MCF 10A (cell line): ENCODE measurements at regions of chr4 and their contacts with region 1.

Region 1: GRCh38 chr4:140052050-140052449 is 101.9 kb downstream of the MAML3 start:
- DNase-seq: peak; percentile 47
- H3K4me3 Mint-ChIP-seq: no peak overlapping the region
- H3K27ac Mint-ChIP-seq: no peak overlapping the region
- H3K4me1 Mint-ChIP-seq: peaks cover 13% of the 10 kb centered on the region
- H3K27me3 Mint-ChIP-seq: no peaks in the 10 kb centered on the region
- CTCF ChIP-seq: peak; percentile 57

Region 2: DNA sequence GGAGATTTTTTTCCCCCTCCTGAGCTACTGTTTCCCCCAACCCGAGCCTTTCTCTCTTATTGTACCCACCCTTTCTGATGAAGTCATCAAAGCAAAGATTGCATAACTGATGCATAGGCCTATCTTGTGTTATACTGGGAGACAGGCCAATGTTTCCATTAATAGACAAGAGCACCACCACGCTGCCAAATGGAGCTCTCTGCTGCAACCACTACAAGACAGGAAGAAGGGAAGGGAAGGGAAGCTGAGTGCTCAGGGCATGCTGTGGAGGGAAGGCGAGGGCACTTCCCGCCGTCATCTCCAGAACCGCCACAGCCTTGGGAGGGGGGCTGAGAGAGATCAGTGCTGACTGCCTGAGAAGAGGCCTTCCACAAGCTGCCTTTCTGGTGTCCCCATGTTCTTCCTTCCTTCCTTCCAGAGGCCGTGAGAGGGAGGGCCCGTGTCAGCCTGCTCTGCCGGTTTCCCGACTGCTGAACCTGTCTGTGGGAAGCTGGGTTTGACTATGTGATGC is 311.5 kb before region 1 on chr4:
- CTCF ChIA-PET with region 1: interaction called, 6 read pairs
- POLR2A ChIA-PET with region 1: interaction called, 4 read pairs
- intact Hi-C with region 1: loop called (anchors 5 kb)
- DNase-seq: peak; percentile 93
- H3K4me3 Mint-ChIP-seq: no peak overlapping the region
- H3K27ac Mint-ChIP-seq: no peak overlapping the region
- H3K4me1 Mint-ChIP-seq: peaks cover 7% of the 10 kb centered on the region
- H3K27me3 Mint-ChIP-seq: no peaks in the 10 kb centered on the region
- CTCF ChIP-seq: peak; percentile 21

Region 3: GRCh38 chr4:140302151-140302859 is 250.3 kb after region 1 on chr4:
- CTCF ChIA-PET with region 1: no interaction called
- POLR2A ChIA-PET with region 1: no interaction called
- intact Hi-C with region 1: no loop called
- DNase-seq: no peak
- H3K4me3 Mint-ChIP-seq: no peak overlapping the region
- H3K27ac Mint-ChIP-seq: no peak overlapping the region
- H3K4me1 Mint-ChIP-seq: peaks cover 29% of the 10 kb centered on the region
- H3K27me3 Mint-ChIP-seq: no peaks in the 10 kb centered on the region
- CTCF ChIP-seq: no peak

Region 4: GRCh38 chr4:140523857-140524742 is 472.1 kb after region 1 on chr4 and contains the start of gene ELMOD2:
- CTCF ChIA-PET with region 1: no interaction called
- POLR2A ChIA-PET with region 1: no interaction called
- intact Hi-C with region 1: no loop called
- DNase-seq: peak; percentile 97
- H3K4me3 Mint-ChIP-seq: peak within 1 kb of the TSS; percentile 76
- H3K27ac Mint-ChIP-seq: peak within 1 kb of the TSS; percentile 47
- H3K4me1 Mint-ChIP-seq: no peaks in the 10 kb centered on the region
- H3K27me3 Mint-ChIP-seq: no peaks in the 10 kb centered on the region
- CTCF ChIP-seq: peak; percentile 84
- total RNA-seq, gene ELMOD2: 29.2 and 45.0 TPM in 2 replicates